IMR-90 (cell line): ENCODE measurements at regions of chr7 and their contacts with region 1.

Region 1: DNA sequence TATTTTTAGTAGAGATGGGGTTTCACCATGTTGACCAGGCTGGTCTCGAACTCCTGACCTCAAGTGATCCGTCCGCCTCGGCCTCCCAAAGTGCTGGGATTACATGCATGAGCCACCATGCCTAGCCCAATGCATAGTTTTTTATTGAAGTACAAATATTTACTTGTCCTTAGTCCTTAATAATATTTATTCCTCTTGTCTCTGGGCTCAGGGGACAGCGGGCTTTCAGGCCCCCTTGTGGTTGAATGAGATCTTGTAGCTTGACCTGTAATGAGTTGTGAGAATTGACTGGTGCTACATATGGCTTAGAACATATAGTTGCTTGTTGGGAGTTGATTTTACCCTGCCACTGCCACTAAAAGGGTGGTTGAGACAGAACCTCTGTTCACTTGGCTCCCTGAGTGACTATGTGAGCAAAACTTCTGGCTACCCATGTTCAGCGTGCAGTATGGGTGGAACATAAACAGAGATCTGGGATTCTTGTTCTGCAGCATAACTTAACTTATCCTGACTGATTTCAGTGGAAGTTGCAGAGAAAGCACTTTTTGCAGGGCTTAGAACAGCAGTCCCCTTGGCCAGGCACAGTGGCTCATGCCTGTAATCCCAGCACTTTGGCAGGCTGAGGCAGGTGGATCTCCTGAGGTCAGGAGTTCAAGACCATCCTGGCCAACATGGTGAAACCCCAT is 14.9 kb downstream of the CCL26 start:
- DNase-seq: peak; percentile 53
- ATAC-seq: peak; percentile 69
- H3K4me3 ChIP-seq: no peak overlapping the region
- H3K27ac ChIP-seq: no peak overlapping the region
- H3K4me1 ChIP-seq: peaks cover 3% of the 10 kb centered on the region
- H3K27me3 ChIP-seq: no peaks in the 10 kb centered on the region
- CTCF ChIP-seq: peak; percentile 58
- POLR2A ChIP-seq: no peak
- RAD21 ChIP-seq: peak; percentile 72

Region 2: GRCh38 chr7:75048435-75049379 is 708.4 kb before region 1 on chr7:
- CTCF ChIA-PET with region 1: no interaction called
- POLR2A ChIA-PET with region 1: no interaction called
- dilution Hi-C with region 1: no loop called
- in situ Hi-C with region 1: no loop called
- intact Hi-C with region 1: no loop called
- DNase-seq: peak; percentile 75
- ATAC-seq: peak; percentile 57
- H3K4me3 ChIP-seq: no peak overlapping the region
- H3K27ac ChIP-seq: peak overlapping the region; percentile 31
- H3K4me1 ChIP-seq: peaks cover 13% of the 10 kb centered on the region
- H3K27me3 ChIP-seq: no peaks in the 10 kb centered on the region
- CTCF ChIP-seq: no peak
- POLR2A ChIP-seq: no peak
- RAD21 ChIP-seq: no peak

Region 3: DNA sequence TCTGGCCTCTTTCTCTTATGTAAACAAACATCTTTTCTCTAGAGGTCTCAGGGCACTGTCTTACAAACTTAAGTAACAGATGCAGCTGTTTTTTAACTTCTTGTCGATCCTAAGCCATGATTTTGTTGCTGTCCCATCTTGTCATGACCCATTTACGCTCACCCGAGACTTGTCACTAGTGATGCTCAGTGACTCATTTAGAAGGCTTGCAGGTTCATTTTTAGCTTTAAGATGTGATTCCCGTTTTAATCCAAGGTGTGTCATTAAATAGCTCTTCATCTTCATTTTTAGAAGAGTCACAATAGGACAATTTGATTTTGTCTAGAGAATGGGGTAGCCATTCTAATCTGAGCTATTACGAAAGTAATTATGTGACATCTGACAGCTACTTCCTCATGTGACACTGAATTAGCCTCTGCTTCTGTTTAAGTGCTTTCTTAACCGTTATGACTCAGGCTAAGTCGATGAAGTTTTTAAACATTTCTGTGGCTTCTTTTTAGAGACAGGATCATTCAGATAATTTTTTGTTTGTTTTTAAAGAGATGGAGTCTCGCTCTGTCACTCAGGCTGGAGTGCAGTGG is 222.3 kb before region 1 on chr7:
- CTCF ChIA-PET with region 1: no interaction called
- POLR2A ChIA-PET with region 1: no interaction called
- dilution Hi-C with region 1: no loop called
- in situ Hi-C with region 1: loop called (anchors 10 kb)
- intact Hi-C with region 1: no loop called
- DNase-seq: peak; percentile 85
- ATAC-seq: peak; percentile 87
- H3K4me3 ChIP-seq: no peak overlapping the region
- H3K27ac ChIP-seq: no peak overlapping the region; the same call in 1 of the 2 replicates
- H3K4me1 ChIP-seq: peaks cover 7% of the 10 kb centered on the region
- H3K27me3 ChIP-seq: peaks cover 6% of the 10 kb centered on the region; the same call in 1 of the 2 replicates
- CTCF ChIP-seq: no peak
- POLR2A ChIP-seq: no peak
- RAD21 ChIP-seq: no peak

Region 4: GRCh38 chr7:75738987-75739795 is 17.9 kb before region 1 on chr7:
- CTCF ChIA-PET with region 1: no interaction called
- POLR2A ChIA-PET with region 1: no interaction called
- dilution Hi-C with region 1: no loop called
- in situ Hi-C with region 1: no loop called
- intact Hi-C with region 1: loop called (anchors 1 kb)
- DNase-seq: peak; percentile 98
- ATAC-seq: peak; percentile 95
- H3K4me3 ChIP-seq: peak overlapping the region; percentile 86
- H3K27ac ChIP-seq: peak overlapping the region; percentile 30
- H3K4me1 ChIP-seq: peaks cover 12% of the 10 kb centered on the region
- H3K27me3 ChIP-seq: peaks cover 2% of the 10 kb centered on the region; the same call in 1 of the 2 replicates
- CTCF ChIP-seq: no peak
- POLR2A ChIP-seq: peak; percentile 51
- RAD21 ChIP-seq: no peak

Region 5: DNA sequence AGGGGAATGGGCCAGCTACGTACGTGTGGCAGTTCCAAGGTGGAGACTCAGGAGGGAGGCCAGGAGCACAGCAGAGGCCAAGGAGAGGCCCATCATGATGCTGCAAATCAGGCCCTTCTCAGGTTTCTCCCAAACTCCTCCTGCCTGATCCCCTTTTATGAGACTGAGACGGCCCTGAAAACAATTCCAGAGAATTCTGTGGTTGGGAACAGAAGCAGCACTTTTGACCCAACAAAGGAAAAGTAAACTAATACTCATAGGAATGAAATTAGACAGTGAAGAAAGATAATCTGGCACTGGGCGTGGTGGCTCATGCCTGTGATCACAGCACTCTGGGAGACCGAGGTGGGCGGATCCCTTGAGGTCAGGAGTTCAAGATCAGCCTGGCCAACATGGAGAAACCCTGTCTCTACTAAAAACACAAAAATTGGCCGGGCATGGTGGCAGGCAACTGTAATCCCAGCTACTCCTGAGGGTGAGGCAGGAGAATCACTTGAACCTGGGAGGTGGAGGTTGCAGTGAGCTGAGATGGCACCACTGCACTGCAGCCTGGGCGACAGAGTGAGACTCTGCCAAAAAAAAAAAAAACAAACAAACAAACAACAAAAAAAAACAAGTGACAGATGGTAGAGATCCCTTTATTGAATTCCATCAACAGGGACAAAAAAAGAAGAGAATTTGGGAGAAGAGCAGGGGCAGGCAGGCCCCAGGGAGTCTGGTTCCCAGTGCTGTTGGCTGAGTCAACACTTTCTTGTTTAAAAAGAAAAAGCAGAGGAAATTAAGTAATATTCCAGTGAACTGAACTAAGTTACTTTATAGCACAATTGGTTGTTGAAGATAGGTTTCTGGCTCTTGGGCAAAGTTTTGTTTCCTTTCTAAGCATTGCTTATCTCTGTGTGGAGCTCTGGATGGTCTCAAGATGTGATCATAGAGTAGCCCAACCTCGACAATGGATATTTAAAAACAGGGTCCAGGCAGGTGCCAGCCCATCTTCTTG is 15.2 kb after region 1 on chr7 and contains the start of gene CCL26:
- CTCF ChIA-PET with region 1: no interaction called
- POLR2A ChIA-PET with region 1: no interaction called
- dilution Hi-C with region 1: no loop called
- in situ Hi-C with region 1: no loop called
- intact Hi-C with region 1: no loop called
- DNase-seq: peak; percentile 79
- ATAC-seq: peak; percentile 73
- H3K4me3 ChIP-seq: no peak within 1 kb of the TSS
- H3K27ac ChIP-seq: no peak within 1 kb of the TSS
- H3K4me1 ChIP-seq: peaks cover 3% of the 10 kb centered on the region; the same call in 1 of the 2 replicates
- H3K27me3 ChIP-seq: peaks cover 7% of the 10 kb centered on the region
- CTCF ChIP-seq: no peak
- POLR2A ChIP-seq: no peak
- RAD21 ChIP-seq: no peak
- total RNA-seq, gene CCL26: not detected in 2 replicates